ENCODE measurements at regions of chr9 and their contacts with region 1.

Region 1: GRCh38 chr9:137945581-137945980 is 68.0 kb downstream of the CACNA1B start:
- DNase-seq: no peak
- ATAC-seq: no peak
- H3K4me3 ChIP-seq: no peak overlapping the region
- H3K27ac ChIP-seq: no peak overlapping the region
- H3K4me1 ChIP-seq: no peaks in the 10 kb centered on the region
- H3K27me3 ChIP-seq: peaks cover 0 to under 1% (median 0%) of the 10 kb centered on the region in 7 donors
- CTCF ChIP-seq: no peak

Region 2: DNA sequence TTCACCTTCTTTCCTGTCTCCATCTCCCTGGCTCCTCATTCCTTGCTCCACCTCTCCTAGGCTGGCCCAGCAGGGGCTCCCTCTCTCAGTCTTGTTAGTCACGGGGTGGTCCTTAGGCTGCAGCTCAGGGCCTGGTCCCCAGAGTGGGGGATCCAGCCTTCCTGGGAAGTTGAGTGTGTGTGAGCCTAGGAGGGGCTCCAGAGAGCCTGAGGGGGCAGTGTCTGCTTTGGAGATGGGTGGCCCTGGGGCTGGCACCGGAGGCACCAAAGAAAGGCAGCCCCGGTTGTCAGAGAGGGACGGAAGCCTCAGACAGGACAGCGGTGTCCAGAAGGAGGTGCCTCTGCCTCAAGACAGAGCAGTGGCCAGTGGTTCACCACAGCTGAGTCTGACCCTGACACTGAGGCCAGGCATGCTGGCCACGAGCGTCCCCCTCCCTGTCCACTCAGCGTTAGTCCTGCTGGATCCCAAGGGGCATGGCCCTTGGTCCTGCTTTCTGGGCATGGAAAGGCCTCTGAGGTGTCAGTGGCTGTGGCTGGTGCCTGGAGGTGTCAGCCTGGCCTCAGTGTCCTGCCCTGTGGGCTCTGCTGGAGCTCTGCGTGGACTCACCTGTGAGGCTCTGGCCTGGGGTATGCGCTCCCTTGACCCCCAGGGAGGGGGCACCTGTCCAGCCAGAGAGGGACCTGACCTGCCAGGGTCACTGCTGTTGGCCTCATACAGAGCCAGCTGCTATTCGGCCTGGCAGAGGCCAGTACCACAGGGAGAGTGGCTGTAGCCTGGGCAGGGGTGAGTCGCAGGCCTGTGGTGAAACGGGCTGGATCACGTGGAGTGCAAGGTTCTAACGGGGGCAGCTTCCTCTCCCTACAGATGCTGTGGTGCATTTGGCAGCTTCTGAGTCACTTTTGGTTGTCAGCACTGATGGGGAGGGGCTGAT is 62.6 kb after region 1 on chr9:
- intact Hi-C with region 1: loop called in 1 of 10 experiments (anchors 10 kb)
- DNase-seq: no peak
- ATAC-seq: peak in 2 of 8 donors; percentile 7 to 40
- H3K4me3 ChIP-seq: no peak overlapping the region
- H3K27ac ChIP-seq: no peak overlapping the region
- H3K4me1 ChIP-seq: no peaks in the 10 kb centered on the region
- H3K27me3 ChIP-seq: peaks cover 0 to 4% (median 0%) of the 10 kb centered on the region in 7 donors
- CTCF ChIP-seq: no peak